Lower leg skin (tissue), 4 donors: ENCODE measurements at regions of chr10 and their contacts with region 1.

Region 1: DNA sequence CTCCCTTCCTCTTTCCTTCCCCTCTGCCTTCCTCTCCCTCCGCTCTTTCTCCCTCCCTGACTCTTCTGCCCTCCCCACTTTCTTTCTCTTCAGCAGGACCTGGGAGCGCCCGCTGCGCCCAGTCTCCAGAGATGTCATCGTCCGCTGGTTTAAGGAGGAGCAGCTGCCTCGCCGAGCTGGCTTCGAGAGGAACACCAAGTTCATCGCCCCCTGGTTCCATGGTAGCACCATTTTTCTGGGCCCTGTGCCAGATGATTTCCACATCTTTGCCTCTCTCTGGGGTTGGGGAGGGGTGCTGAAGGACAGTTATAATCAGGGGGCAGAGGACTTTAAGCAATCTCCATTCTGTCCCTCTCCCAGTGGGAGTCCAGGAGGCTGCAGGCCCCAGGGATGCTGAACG is 71.6 kb downstream of the SH2D4B start:
- DNase-seq: peak in 1 of 2 donors; percentile 78
- H3K4me3 ChIP-seq: no peak overlapping the region
- CTCF ChIP-seq: no peak
- POLR2A ChIP-seq: no peak

Region 2: DNA sequence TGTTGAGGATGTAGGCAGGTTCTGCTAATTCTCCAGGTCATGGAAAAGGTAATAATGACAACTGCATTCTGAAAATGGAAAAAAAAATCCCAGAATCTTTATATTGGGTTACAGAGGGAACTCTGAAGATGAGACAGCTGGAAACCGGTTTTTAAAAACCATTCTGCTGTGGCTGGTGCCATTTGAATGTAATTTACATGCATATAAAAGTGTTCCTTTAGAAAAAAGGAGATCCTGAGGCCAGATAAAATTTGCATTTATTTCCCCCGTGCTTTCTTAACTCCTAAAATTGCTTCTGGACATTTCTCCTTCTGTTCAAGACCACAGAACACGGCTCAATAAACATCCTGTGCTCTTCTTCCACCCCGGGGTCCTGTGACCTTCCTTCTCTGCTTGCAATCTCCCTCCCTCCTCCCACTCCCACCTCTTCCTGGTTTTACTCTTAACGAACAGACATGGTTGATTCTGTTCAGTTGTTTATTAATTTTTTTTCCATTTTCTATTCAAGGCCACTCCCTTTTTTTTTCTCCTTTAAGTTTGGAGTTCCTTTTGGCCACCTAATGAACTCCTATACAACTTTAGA is 30.1 kb before region 1 on chr10:
- intact Hi-C with region 1: no loop called
- DNase-seq: no peak
- H3K4me3 ChIP-seq: no peak overlapping the region
- CTCF ChIP-seq: no peak
- POLR2A ChIP-seq: no peak

Region 3: DNA sequence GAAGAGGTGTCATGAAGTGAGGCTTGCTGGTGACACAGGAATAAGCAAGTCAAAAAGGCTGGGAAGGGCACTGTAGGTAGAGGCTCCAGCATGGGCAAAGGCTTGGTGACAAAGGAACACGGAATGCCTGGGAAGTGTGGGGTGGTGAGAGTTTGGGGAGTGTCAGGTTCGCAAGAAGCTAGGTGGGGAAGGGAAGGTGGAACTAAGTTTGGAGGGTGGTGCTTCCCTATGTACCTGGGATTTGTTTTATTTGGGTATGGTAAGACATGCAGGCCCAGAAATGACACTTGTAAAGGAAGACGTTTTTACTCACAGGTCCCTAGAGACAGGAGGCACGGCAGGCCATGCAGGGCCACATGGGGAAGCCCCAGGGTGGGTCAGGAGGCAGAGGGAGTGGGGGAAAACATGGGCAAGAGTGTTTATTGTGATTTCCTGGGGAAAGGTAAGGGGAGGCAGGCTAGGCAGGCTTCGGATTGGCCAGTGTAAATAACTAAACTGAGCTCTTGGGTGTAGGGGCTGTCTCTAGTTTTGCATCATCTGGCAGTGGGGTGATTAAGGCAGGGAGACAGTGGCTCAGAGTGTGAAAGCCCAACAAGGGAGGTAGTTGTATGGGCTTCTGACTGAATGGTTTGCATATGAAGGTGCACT is 19.5 kb before region 1 on chr10:
- intact Hi-C with region 1: loop called (anchors 1 kb)
- DNase-seq: peak in 1 of 2 donors; percentile 31
- H3K4me3 ChIP-seq: no peak overlapping the region
- CTCF ChIP-seq: no peak
- POLR2A ChIP-seq: no peak